ENCODE measurements at regions of chr1 and their contacts with region 1.

Region 1: GRCh38 chr1:44645476-44646244 is 28.6 kb downstream of the TMEM53 start:
- DNase-seq: peak; percentile 22 to 85
- H3K4me3 ChIP-seq: peak overlapping the region; percentile 30 to 40
- H3K27ac ChIP-seq: peak overlapping the region; percentile 92 to 94
- H3K4me1 ChIP-seq: peaks cover 6 to 33% of the 10 kb centered on the region in 2 donors
- H3K27me3 ChIP-seq: no peaks in the 10 kb centered on the region
- CTCF ChIP-seq: peak in 2 of 3 experiments; percentile 7 to 10

Region 2: DNA sequence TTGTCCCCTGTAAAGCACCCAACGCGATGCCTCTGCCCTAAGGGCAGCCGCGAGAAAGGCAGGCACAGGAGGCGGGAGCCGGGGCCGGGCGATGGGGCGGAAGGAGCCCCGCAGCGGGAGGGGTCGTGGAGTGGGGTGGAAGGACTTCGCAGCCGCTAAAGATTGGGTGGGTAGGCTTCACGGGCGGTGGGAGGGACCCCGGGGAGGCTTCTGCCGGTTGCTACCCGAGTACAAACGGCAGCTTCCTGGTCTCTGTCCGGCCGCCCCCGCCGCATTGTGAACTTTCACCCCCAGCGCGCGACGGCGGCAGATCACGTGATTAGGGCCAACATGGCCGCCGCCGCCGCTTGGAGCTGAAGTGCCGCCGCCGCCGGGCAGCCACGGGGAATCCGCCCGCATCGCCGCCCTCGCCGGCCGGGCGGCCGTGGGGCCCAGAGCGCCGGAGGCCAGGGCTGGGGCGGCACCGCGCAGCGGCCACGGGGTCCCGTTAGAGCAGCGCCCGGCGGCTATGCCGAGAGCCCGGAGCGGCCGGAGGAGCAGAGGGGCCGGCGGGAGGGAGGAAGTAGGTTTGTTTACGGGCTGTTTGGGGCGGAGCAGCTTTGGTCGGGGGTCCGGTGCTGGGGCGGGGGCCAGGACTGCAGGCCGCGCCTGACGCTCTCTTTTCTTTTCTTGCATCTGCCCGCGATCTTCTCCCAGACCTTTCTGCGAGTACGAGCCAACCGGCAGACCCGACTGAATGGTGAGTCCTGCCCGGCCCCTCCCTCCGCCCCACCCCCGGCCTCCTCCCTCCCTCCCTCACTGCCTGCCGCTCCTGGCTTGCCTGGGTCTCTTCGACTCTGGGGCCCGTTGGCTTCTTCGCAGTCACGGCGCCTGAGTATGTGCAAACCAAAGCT is 13.8 kb before region 1 on chr1:
- intact Hi-C with region 1: loop called (anchors 1 kb)
- DNase-seq: peak; percentile 62 to 94
- H3K4me3 ChIP-seq: peak overlapping the region; percentile 84 to 96
- H3K27ac ChIP-seq: peak overlapping the region; percentile 95 to 97
- H3K4me1 ChIP-seq: peaks cover 12 to 13% of the 10 kb centered on the region in 2 donors
- H3K27me3 ChIP-seq: no peaks in the 10 kb centered on the region
- CTCF ChIP-seq: peak in 1 of 3 experiments; percentile 14

Region 3: GRCh38 chr1:44884746-44885145 is 239.1 kb after region 1 on chr1:
- intact Hi-C with region 1: no loop called
- DNase-seq: no peak
- H3K4me3 ChIP-seq: no peak overlapping the region
- H3K27ac ChIP-seq: no peak overlapping the region
- H3K4me1 ChIP-seq: peaks cover 0 to 2% of the 10 kb centered on the region in 2 donors
- H3K27me3 ChIP-seq: no peaks in the 10 kb centered on the region
- CTCF ChIP-seq: no peak